ENCODE measurements at regions of chr2 and their contacts with region 1.

Region 1: DNA sequence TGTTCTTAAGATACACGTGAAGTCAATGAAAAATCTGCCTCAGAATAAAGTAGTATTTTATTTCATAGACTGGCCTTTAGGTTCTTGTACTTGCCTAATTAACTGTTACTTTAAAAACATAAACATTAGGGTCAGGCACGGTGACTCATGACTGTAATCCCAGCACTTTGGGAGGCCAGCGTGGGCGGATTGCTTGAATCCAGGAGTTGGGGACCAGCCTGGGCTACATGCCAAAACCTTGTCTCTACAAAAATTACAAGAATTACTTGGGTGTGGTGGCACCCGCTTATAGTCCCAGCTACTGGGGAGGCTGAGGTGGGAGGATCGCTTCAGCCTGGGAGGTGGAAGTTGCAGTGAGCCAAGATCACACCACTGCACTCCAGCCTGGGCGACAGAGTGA is 16.0 kb upstream of the SNORC start:
- DNase-seq: peak; percentile 79
- H3K4me3 ChIP-seq: no peak overlapping the region
- H3K27ac ChIP-seq: peak overlapping the region; percentile 17; the same call in 1 of the 2 replicates
- H3K4me1 ChIP-seq: peaks cover 14% of the 10 kb centered on the region
- H3K27me3 ChIP-seq: no peaks in the 10 kb centered on the region

Region 2: GRCh38 chr2:232327105-232328041 is 526.7 kb before region 1 on chr2:
- in situ Hi-C with region 1: no loop called
- DNase-seq: peak; percentile 65
- H3K4me3 ChIP-seq: no peak overlapping the region
- H3K27ac ChIP-seq: no peak overlapping the region
- H3K4me1 ChIP-seq: no peaks in the 10 kb centered on the region
- H3K27me3 ChIP-seq: no peaks in the 10 kb centered on the region

Region 3: DNA sequence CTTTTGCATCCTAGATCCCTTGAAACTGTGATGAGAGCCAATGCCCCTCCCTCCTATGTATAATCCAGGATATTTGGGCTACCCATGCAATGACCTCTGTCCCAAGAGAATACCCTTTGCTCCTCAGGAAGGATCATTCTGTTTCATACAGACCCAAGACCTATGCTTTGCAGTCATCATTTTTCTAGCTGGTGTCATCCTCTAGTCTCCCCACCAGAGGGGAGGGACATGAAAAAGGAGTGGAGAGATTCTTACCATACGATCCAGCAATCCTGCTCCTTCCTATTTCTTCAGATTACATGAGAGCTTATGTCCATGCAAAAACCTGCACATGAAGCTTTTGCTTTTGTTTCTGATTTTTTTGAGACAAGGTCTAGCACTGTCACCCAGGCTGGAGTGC is 170.7 kb before region 1 on chr2:
- in situ Hi-C with region 1: no loop called
- DNase-seq: no peak
- H3K4me3 ChIP-seq: no peak overlapping the region
- H3K27ac ChIP-seq: no peak overlapping the region
- H3K4me1 ChIP-seq: no peaks in the 10 kb centered on the region
- H3K27me3 ChIP-seq: peaks cover 19% of the 10 kb centered on the region; the same call in 1 of the 2 replicates

Region 4: GRCh38 chr2:233053928-233054784 is 200.1 kb after region 1 on chr2:
- in situ Hi-C with region 1: loop called (anchors 10 kb)
- DNase-seq: peak; percentile 61
- H3K4me3 ChIP-seq: no peak overlapping the region
- H3K27ac ChIP-seq: no peak overlapping the region
- H3K4me1 ChIP-seq: peaks cover 11% of the 10 kb centered on the region; the same call in 1 of the 2 replicates
- H3K27me3 ChIP-seq: no peaks in the 10 kb centered on the region

Region 5: DNA sequence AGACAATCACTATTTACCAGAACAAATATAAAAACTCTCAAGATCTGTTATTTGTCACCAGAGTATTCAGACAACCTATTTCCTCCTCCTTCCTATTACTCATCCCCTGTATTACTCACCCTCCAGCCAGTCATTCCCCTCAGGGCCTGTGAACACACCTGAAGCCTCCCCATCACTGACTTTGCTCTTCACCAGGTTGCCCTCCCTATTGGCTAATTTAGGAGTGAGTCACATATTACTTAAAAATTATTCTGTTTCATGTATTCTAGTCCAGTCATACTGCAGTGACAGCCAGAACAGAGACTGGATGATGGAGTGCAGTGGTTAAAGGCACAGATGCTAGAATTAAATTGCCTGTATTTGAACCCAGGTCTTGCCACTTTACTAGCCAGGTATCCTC is 393.7 kb after region 1 on chr2:
- in situ Hi-C with region 1: loop called (anchors 10 kb)
- DNase-seq: peak; percentile 69
- H3K4me3 ChIP-seq: no peak overlapping the region
- H3K27ac ChIP-seq: no peak overlapping the region
- H3K4me1 ChIP-seq: peaks cover 6% of the 10 kb centered on the region; the same call in 1 of the 2 replicates
- H3K27me3 ChIP-seq: no peaks in the 10 kb centered on the region